A549 (cell line): ENCODE measurements at regions of chr1 and their contacts with region 1.

Region 1: DNA sequence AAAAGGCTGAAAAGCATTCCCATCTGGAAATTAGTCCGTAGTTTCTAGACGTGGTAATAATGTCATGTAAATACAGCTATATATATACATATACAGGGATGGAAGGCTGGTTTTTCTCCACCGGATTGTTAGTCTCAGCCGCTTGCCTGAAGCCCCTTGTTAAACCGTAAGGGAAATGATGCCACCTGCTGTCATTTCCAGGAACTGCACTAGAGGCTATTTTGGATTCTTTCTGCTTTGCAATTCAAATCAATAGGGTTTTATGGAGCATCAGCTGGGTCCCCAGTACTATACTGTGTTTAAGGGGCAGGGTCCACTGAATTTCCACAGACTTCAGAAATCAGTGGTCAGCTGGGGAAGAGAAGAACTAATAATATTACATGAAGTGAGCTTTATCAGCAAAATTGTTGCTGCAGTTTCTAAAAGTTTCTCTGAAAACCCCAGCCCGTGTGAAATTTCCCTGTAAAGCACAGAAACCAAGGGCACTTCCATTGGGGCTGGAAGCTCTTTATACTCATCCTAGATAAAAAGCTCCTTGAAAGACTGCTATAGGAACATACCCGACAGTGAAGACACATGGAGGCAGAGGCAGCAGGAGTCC is 33.8 kb upstream of the MPZL1 start:
- DNase-seq: peak; percentile 76 to 78
- ATAC-seq: peak; percentile 60 to 82
- H3K4me3 ChIP-seq: no peak overlapping the region
- H3K27ac ChIP-seq: no peak overlapping the region
- H3K4me1 ChIP-seq: peaks cover 2% of the 10 kb centered on the region; the same call in 2 of the 3 replicates
- CTCF ChIP-seq: peak; percentile 91
- EP300 ChIP-seq: no peak
- POLR2A ChIP-seq: no peak
- RAD21 ChIP-seq: peak; percentile 94 to 96

Region 2: GRCh38 chr1:167582064-167582463 is 106.0 kb before region 1 on chr1:
- CTCF ChIA-PET with region 1: interaction called, 11 read pairs
- POLR2A ChIA-PET with region 1: no interaction called
- DNase-seq: no peak
- ATAC-seq: no peak
- H3K4me3 ChIP-seq: no peak overlapping the region
- H3K27ac ChIP-seq: no peak overlapping the region
- H3K4me1 ChIP-seq: no peaks in the 10 kb centered on the region
- CTCF ChIP-seq: no peak
- EP300 ChIP-seq: no peak
- POLR2A ChIP-seq: no peak
- RAD21 ChIP-seq: no peak

Region 3: GRCh38 chr1:167599957-167600581 is 88.0 kb before region 1 on chr1:
- CTCF ChIA-PET with region 1: interaction called, 115 read pairs
- POLR2A ChIA-PET with region 1: no interaction called
- DNase-seq: peak in 1 of 2 experiments; percentile 42
- ATAC-seq: peak; percentile 86 to 87
- H3K4me3 ChIP-seq: no peak overlapping the region
- H3K27ac ChIP-seq: 0 out of 6 replicates have a peak overlapping the region, but pooled peaks of 1 of the 2 experiments have one; percentile 0
- H3K4me1 ChIP-seq: peaks cover 15% of the 10 kb centered on the region; the same call in 2 of the 3 replicates
- CTCF ChIP-seq: peak; percentile 71
- EP300 ChIP-seq: no peak
- POLR2A ChIP-seq: no peak
- RAD21 ChIP-seq: peak; percentile 81 to 82

Region 4: DNA sequence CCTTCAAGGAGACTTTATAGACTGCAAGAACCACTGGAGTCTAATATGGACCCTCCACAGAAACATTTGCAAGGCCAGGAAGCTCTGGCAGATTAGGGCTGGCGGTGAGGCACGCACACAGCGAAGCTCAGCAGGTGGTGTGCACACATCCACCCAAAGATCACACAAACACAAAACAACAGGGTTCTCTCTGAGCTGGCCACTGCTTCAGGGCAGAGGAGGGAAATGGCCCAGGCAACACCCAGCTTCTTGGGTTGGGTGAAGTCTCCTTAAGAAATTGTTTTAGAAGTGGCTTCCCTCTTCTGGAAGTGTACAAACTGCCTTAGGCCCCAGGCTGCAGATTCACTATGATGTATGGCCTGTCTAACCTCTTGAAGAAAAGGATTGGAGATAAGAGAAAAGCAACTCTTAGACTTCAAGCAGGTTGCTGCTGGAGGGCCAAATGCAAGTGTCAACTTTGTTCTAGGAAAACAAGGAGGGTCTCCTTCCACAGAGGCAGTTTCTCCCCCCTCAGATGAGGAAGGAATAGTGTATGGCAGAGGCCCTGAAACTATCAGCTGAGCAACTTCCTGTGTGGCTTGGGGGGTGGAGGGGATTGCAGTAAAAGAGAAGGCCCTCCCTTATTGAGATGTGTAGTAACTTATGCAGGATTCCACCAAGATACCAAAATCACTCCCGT is 55.9 kb before region 1 on chr1:
- CTCF ChIA-PET with region 1: interaction called, 11 read pairs
- POLR2A ChIA-PET with region 1: no interaction called
- DNase-seq: no peak
- ATAC-seq: no peak
- H3K4me3 ChIP-seq: no peak overlapping the region
- H3K27ac ChIP-seq: no peak overlapping the region
- H3K4me1 ChIP-seq: peaks cover 7% of the 10 kb centered on the region; the same call in 1 of the 3 replicates
- CTCF ChIP-seq: no peak
- EP300 ChIP-seq: no peak
- POLR2A ChIP-seq: no peak
- RAD21 ChIP-seq: no peak

Region 5: DNA sequence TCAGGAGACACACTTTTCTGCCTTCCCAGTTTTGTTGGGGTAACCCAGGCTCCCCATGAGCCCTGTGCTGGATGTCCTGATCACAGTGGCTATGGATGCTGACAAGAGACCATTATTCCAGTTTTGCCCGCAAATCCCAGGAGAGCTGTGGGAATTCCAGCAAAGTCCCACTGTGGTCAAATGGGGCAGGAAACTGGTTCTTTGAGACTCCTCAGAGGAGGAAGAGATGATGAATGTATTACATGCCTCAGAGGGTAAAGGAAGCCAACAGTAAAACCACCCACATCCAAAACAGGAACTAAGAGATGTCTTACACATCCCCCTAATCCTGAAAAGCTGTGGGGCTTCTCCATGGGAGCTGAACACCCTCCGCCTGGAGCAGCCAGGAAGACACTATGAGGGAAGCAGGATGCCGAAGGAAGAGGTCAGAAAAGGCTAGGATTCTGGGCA is 20.9 kb after region 1 on chr1:
- CTCF ChIA-PET with region 1: interaction called, 18 read pairs
- POLR2A ChIA-PET with region 1: no interaction called
- DNase-seq: no peak
- ATAC-seq: no peak
- H3K4me3 ChIP-seq: no peak overlapping the region
- H3K27ac ChIP-seq: no peak overlapping the region
- H3K4me1 ChIP-seq: no peaks in the 10 kb centered on the region
- CTCF ChIP-seq: no peak
- EP300 ChIP-seq: no peak
- POLR2A ChIP-seq: no peak
- RAD21 ChIP-seq: no peak